Adrenal gland (tissue), 19 donors: ENCODE measurements at regions of chr4 and their contacts with region 1.

Region 1: GRCh38 chr4:139642364-139642763 is 23.3 kb upstream of the MGST2 start:
- DNase-seq: no peak
- H3K4me3 ChIP-seq: no peak overlapping the region
- H3K27ac ChIP-seq: no peak overlapping the region
- H3K4me1 ChIP-seq: no peaks in the 10 kb centered on the region
- H3K27me3 ChIP-seq: no peaks in the 10 kb centered on the region
- CTCF ChIP-seq: no peak
- POLR2A ChIP-seq: no peak

Region 2: DNA sequence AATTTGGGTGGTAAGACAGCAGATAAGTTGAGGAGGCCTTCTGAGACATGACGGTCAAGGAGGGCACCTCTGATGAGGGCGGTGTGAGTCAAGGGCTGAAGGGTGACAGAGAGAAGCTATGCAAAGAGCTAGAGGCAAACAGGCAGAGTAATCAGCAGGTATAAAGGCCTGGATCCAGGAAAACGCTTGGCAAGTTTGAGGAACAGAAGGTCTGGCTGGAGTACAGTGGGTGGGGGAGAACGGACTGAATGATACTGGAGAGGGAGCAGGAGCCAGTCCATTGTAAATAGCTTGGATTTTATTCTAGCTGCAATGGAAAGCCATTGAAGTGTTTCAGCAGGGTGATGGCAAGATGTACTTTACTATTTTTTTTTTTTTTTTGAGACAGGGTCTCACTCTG is 149.2 kb before region 1 on chr4:
- intact Hi-C with region 1: loop called in 1 of 2 experiments (anchors 10 kb)
- DNase-seq: no peak
- H3K4me3 ChIP-seq: no peak overlapping the region
- H3K27ac ChIP-seq: no peak overlapping the region
- H3K4me1 ChIP-seq: no peaks in the 10 kb centered on the region
- H3K27me3 ChIP-seq: no peaks in the 10 kb centered on the region
- CTCF ChIP-seq: no peak
- POLR2A ChIP-seq: no peak

Region 3: DNA sequence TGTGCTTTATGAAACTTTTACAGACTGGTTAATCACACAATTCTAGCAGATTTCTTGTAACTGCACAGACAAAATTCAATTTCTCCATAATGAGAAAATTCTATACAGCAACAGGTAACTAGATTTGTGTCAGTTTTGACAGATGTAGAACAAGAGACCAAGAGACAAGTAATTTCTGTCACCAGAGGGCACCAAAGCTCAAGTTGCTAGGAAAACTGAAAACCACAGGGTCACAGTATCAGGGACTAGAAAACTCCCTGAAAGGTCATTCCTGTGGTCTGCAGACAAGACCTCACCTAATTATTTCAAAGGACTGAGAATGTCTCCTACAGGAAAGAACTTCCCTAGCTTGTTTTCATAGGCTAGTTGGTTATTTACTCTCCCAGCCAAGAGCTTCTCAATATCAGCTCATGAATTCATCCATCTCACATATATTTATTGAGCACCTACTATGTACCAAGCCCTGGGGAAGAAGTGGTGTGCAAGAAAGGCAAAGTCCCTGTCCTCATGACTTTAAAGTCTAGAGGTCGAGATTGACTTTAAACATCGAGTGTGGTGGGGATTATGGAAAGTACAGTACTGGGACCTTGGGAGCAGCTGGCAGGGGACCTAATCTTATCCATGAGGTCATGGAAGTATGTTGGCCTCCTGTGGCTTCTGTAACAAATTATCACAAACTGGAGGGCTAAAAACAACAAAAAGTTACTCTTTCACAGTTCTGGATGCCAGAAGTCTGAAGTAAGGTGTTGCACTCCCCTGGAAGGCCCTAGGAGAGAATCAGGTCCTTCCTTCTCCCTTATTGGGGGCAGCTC is 38.6 kb before region 1 on chr4:
- intact Hi-C with region 1: loop called in 1 of 2 experiments (anchors 5 kb)
- DNase-seq: peak in 6 of 7 donors; percentile 33 to 64 (median 60)
- H3K4me3 ChIP-seq: no peak overlapping the region
- H3K27ac ChIP-seq: no peak overlapping the region
- H3K4me1 ChIP-seq: no peaks in the 10 kb centered on the region
- H3K27me3 ChIP-seq: no peaks in the 10 kb centered on the region
- CTCF ChIP-seq: peak; percentile 45 to 83 (median 64)
- POLR2A ChIP-seq: no peak

Region 4: GRCh38 chr4:139783741-139784484 is 141.5 kb after region 1 on chr4:
- intact Hi-C with region 1: no loop called
- DNase-seq: no peak
- H3K4me3 ChIP-seq: no peak overlapping the region
- H3K27ac ChIP-seq: peak overlapping the region in 1 of 5 donors; percentile 30
- H3K4me1 ChIP-seq: no peaks in the 10 kb centered on the region
- H3K27me3 ChIP-seq: no peaks in the 10 kb centered on the region
- CTCF ChIP-seq: no peak
- POLR2A ChIP-seq: no peak